Adrenal gland (tissue), 19 donors: ENCODE measurements at regions of chr17 and their contacts with region 1.

Region 1: DNA sequence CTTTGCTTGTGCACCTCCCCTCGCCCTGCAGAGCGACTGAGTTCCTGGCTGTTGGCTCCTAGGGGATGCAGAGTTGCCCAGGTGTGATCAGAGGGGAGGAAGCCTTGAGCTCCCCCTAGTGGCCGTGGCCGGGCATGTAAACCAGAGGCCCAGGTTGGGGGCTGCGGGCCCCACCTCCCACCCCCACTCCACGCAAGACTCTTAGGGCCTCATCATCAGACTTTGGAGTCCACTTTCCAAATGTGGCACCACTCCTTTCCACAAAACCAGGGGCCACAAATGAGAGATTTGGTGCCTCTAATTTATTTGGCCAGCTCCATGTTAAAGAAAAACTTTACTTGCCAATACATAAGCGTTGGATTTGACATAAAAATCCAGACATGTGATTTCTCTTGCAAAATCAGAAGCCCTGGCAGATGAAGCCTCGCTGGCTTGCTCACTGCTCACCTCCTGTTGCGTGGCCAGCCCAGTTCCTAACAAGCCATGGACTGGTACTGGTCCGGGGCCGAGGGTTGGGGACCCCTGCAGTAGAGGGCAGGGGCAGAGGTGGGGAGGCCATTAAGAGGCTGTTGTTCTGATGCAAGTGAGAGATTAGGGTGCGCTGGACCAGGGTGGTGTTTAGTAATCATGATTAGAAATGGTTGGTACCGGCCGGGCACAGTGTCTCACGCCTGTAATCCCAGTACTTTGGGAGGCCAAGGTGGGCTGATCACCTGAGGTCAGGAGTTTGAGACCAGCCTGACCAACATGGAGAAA is 28.7 kb upstream of the GAS7 start:
- DNase-seq: peak; percentile 31 to 59 (median 44)
- H3K4me3 ChIP-seq: no peak overlapping the region
- H3K27ac ChIP-seq: no peak overlapping the region
- H3K4me1 ChIP-seq: no peaks in the 10 kb centered on the region
- H3K27me3 ChIP-seq: no peaks in the 10 kb centered on the region
- CTCF ChIP-seq: peak; percentile 66 to 76 (median 70)
- POLR2A ChIP-seq: no peak

Region 2: GRCh38 chr17:9924735-9925191 is 302.3 kb before region 1 on chr17:
- intact Hi-C with region 1: loop called in 1 of 2 experiments (anchors 5 kb)
- DNase-seq: peak in 3 of 7 donors; percentile 20 to 54 (median 26)
- H3K4me3 ChIP-seq: no peak overlapping the region
- H3K27ac ChIP-seq: no peak overlapping the region
- H3K4me1 ChIP-seq: no peaks in the 10 kb centered on the region
- H3K27me3 ChIP-seq: no peaks in the 10 kb centered on the region
- CTCF ChIP-seq: peak; percentile 79 to 91 (median 84)
- POLR2A ChIP-seq: no peak

Region 3: GRCh38 chr17:9968902-9969617 is 258.0 kb before region 1 on chr17:
- intact Hi-C with region 1: loop called in 1 of 2 experiments (anchors 10 kb)
- DNase-seq: no peak
- H3K4me3 ChIP-seq: no peak overlapping the region
- H3K27ac ChIP-seq: no peak overlapping the region
- H3K4me1 ChIP-seq: peaks cover 0 to 4% of the 10 kb centered on the region in 2 donors
- H3K27me3 ChIP-seq: no peaks in the 10 kb centered on the region
- CTCF ChIP-seq: no peak
- POLR2A ChIP-seq: no peak

Region 4: DNA sequence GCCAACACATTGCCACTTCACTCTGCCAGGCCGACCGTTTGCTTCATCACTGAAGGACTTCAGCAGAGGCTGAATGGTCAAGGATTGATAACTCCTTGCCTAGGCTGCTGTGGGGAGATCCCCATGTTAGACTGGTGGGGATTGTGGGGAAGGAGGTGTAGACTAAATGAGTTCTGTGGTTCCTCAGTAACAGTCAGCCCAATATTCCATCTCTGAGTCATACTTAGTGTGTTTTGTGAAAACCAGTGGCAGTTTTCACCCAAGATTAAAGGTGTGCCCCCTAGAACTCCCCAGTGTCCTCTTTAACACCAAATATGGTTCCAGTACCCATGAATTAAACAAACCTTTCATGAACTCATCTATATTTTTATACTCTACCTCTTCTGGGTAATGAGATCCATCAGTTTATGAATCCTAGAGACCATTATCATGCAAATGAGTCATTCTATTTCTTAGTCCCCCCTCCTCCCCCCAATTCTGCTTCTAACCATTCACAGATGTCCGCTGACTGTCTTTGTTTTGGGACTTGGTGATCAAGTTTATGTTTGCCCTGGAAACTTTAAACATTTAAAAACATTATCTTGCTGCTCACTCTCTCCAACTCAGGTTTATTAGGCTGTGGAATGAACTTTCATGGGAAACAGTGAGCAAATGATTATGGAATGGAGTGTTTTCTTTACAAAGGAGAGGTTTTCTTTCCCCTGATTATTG is 38.1 kb after region 1 on chr17:
- intact Hi-C with region 1: no loop called
- DNase-seq: no peak
- H3K4me3 ChIP-seq: no peak overlapping the region
- H3K27ac ChIP-seq: no peak overlapping the region
- H3K4me1 ChIP-seq: no peaks in the 10 kb centered on the region
- H3K27me3 ChIP-seq: peaks cover 5% of the 10 kb centered on the region
- CTCF ChIP-seq: no peak
- POLR2A ChIP-seq: no peak